Common myeloid progenitor, CD34-positive (primary cell): ENCODE measurements at regions of chr22 and their contacts with region 1.

Region 1: GRCh38 chr22:31241200-31241599 is 29.1 kb downstream of the LIMK2 start:
- DNase-seq: no peak
- H3K4me3 ChIP-seq: no peak overlapping the region
- H3K27ac ChIP-seq: no peak overlapping the region
- H3K4me1 ChIP-seq: peaks cover 0 to 22% (median 10%) of the 10 kb centered on the region in 4 experiments
- H3K27me3 ChIP-seq: no peaks in the 10 kb centered on the region

Region 2: GRCh38 chr22:31253949-31254348 is 12.7 kb after region 1 on chr22:
- CTCF ChIA-PET with region 1: interaction called, 10 read pairs
- POLR2A ChIA-PET with region 1: interaction called, 3 read pairs
- DNase-seq: no peak
- H3K4me3 ChIP-seq: no peak overlapping the region
- H3K27ac ChIP-seq: no peak overlapping the region
- H3K4me1 ChIP-seq: no peaks in the 10 kb centered on the region
- H3K27me3 ChIP-seq: no peaks in the 10 kb centered on the region